Activated naive CD4-positive, alpha-beta T cell treated with anti-CD3 and anti-CD28 coated beads for 36 hours (primary cell): ENCODE measurements at regions of chr7 and their contacts with region 1.

Region 1: GRCh38 chr7:129367700-129368388 is 66.4 kb upstream of the STRIP2 start:
- DNase-seq: peak; percentile 93
- H3K4me3 Mint-ChIP-seq: peak overlapping the region; percentile 63
- H3K27ac Mint-ChIP-seq: peak overlapping the region; percentile 94
- H3K4me1 Mint-ChIP-seq: peaks cover 45% of the 10 kb centered on the region
- H3K27me3 Mint-ChIP-seq: no peaks in the 10 kb centered on the region

Region 2: DNA sequence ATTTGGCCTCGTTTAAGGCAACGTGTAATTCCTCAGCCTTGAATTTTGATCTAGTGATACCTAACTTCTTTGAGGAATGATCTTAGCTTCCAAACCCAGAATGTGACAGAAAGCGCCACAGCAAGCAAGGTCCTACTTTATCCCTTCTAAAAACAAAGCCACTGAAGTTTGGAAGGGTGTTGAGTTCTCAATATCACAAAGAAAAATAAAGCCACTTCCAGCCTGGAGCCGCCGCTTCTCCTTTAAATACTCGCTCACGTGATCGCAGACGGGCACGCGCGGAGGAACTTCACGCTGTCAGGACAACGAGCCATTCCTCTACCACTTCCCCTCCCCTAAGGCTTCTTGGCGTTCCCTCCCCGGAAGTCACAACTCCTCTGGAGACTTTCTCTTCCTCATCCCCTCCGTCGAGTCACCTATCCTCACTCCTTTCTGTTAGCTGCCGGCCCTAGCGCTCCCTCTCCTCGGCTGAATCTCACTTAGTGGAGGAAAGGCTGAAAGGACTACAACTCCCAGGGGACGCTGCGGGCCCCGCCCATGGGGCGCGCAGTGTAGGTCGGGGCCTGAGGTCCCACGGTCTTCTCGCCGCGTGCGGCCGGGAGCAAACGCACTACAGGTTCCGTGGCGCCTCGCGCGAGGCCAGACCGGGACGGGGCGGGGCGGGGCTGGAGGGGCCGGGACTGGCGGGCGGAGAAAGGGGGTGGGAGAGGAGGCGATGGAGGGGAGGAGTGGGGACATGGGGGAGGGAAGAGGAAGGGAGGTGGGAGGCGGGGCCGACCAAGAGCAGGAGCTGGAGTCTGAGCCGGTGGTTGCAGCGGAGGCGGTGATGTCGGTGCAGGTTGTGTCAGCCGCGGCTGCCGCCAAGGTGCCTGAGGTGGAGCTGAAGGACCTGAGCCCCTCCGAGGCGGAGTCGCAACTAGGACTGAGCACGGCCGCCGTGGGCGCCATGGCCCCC is 143.3 kb before region 1 on chr7 and contains the start of gene AHCYL2:
- CTCF ChIA-PET with region 1: interaction called, 17 read pairs
- intact Hi-C with region 1: loop called (anchors 2 kb)
- DNase-seq: peak; percentile 99
- H3K4me3 Mint-ChIP-seq: peak within 1 kb of the TSS; percentile 88
- H3K27ac Mint-ChIP-seq: peak within 1 kb of the TSS; percentile 90
- H3K4me1 Mint-ChIP-seq: peaks cover 31% of the 10 kb centered on the region
- H3K27me3 Mint-ChIP-seq: no peaks in the 10 kb centered on the region
- total RNA-seq, gene AHCYL2: 29.1 to 30.4 TPM

Region 3: GRCh38 chr7:129351320-129351719 is 16.5 kb before region 1 on chr7:
- CTCF ChIA-PET with region 1: interaction called, 67 read pairs
- intact Hi-C with region 1: no loop called
- DNase-seq: peak; percentile 23
- H3K4me3 Mint-ChIP-seq: no peak overlapping the region
- H3K27ac Mint-ChIP-seq: no peak overlapping the region
- H3K4me1 Mint-ChIP-seq: peaks cover 6% of the 10 kb centered on the region
- H3K27me3 Mint-ChIP-seq: no peaks in the 10 kb centered on the region

Region 4: GRCh38 chr7:129401967-129402860 is 34.4 kb after region 1 on chr7:
- CTCF ChIA-PET with region 1: interaction called, 12 read pairs
- intact Hi-C with region 1: loop called (anchors 1 kb)
- DNase-seq: peak; percentile 74
- H3K4me3 Mint-ChIP-seq: no peak overlapping the region
- H3K27ac Mint-ChIP-seq: no peak overlapping the region
- H3K4me1 Mint-ChIP-seq: peaks cover 36% of the 10 kb centered on the region
- H3K27me3 Mint-ChIP-seq: no peaks in the 10 kb centered on the region

Region 5: DNA sequence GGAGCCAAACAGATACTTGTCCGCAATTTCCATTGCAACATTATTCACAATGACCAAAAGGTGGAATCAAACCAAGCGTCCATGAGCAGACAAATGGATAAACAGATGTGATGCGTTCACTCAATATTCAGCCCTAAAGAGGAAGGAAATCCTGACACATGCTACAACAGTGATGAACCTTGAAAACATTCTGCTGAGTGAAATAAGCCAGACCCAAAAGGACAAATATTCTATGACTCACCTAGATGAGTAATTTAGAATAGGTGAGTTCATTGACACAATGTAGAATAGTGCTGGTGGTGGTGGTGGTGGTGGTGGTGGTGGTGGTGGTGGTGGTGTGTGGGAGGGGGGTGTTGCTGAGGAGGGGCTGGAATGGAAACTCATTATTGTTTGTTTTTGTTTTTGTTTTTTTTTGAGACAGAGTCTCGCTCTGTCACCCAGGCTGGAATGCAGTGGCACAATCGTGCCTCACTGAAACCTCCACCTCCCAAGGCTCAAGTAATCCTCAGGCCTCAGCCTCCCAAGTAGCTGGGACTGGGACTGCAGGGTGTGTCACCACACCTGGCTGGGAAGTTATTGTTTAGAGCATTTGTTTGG is 163.0 kb after region 1 on chr7:
- CTCF ChIA-PET with region 1: interaction called, 6 read pairs
- intact Hi-C with region 1: loop called (anchors 1 kb)
- DNase-seq: peak; percentile 71
- H3K4me3 Mint-ChIP-seq: no peak overlapping the region
- H3K27ac Mint-ChIP-seq: no peak overlapping the region
- H3K4me1 Mint-ChIP-seq: peaks cover 11% of the 10 kb centered on the region
- H3K27me3 Mint-ChIP-seq: peaks cover 3% of the 10 kb centered on the region

Region 6: GRCh38 chr7:129635300-129636029 is 267.6 kb after region 1 on chr7:
- CTCF ChIA-PET with region 1: interaction called, 11 read pairs
- intact Hi-C with region 1: loop called (anchors 1 kb)
- DNase-seq: peak; percentile 89
- H3K4me3 Mint-ChIP-seq: no peak overlapping the region
- H3K27ac Mint-ChIP-seq: no peak overlapping the region
- H3K4me1 Mint-ChIP-seq: peaks cover 45% of the 10 kb centered on the region
- H3K27me3 Mint-ChIP-seq: no peaks in the 10 kb centered on the region

Region 7: GRCh38 chr7:130010689-130011412 is 643.0 kb after region 1 on chr7:
- CTCF ChIA-PET with region 1: interaction called, 3 read pairs
- intact Hi-C with region 1: loop called (anchors 1 kb)
- DNase-seq: peak; percentile 98
- H3K4me3 Mint-ChIP-seq: no peak overlapping the region
- H3K27ac Mint-ChIP-seq: peak overlapping the region; percentile 64
- H3K4me1 Mint-ChIP-seq: peaks cover 13% of the 10 kb centered on the region
- H3K27me3 Mint-ChIP-seq: no peaks in the 10 kb centered on the region